Naive thymus-derived CD4-positive, alpha-beta T cell (primary cell): ENCODE measurements at regions of chr11 and their contacts with region 1.

Region 1: GRCh38 chr11:72222907-72223614 is 1.5 kb upstream of the INPPL1 start:
- DNase-seq: peak; percentile 81 to 97 (median 90)
- ATAC-seq: peak; percentile 89
- H3K4me3 ChIP-seq: peak overlapping the region; percentile 77
- H3K4me3 Mint-ChIP-seq: peak overlapping the region; percentile 88 to 99 (median 91)
- H3K27ac ChIP-seq: peak overlapping the region; percentile 88
- H3K27ac Mint-ChIP-seq: peak overlapping the region; percentile 76 to 95 (median 89)
- H3K4me1 ChIP-seq: peaks cover 10 to 12% of the 10 kb centered on the region in 2 donors
- H3K4me1 Mint-ChIP-seq: peaks cover 12 to 31% (median 24%) of the 10 kb centered on the region in 7 donors
- H3K27me3 ChIP-seq: no peaks in the 10 kb centered on the region
- H3K27me3 Mint-ChIP-seq: peaks cover 0 to 8% (median 5%) of the 10 kb centered on the region in 5 donors

Region 2: DNA sequence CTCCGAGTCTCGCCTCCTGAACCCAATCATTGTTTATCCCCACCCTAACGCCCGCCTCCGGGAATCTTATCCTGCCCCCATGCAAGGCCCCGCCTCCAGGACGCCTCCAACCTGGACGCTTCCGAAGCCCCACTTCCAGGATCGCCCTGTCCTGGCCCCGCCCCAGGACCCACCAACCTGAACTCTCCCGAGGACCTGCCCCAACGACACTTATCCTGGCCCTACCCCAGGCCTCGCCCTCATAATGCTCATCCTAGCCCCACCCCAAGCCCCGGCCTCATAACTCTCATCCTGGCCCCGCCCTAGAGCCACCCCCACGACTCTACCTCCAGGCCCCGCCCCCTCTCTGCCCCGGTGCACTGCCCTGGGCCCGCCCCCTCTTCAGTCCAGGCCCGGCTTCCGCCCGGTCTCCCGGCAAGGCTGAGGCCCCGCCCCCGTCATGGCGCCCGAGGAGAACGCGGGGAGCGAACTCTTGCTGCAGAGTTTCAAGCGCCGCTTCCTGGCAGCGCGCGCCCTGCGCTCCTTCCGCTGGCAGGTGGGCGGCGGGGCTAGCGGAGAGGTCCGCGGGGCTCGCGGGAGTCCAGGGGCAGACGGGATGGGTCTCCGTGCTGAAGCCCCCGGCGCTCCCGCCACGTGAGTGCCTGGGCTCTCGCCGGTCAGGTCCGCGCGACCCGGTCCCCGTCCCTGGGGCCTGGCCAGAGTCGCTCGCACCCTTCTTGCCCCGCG is 435.8 kb before region 1 on chr11:
- CTCF ChIA-PET with region 1: no interaction called
- POLR2A ChIA-PET with region 1: no interaction called
- intact Hi-C with region 1: loop called in 1 of 2 experiments (anchors 5 kb)
- DNase-seq: peak; percentile 86 to 96 (median 94)
- ATAC-seq: peak; percentile 98
- H3K4me3 ChIP-seq: peak overlapping the region; percentile 86
- H3K4me3 Mint-ChIP-seq: peak overlapping the region; percentile 95 to 100 (median 98)
- H3K27ac ChIP-seq: peak overlapping the region; percentile 93
- H3K27ac Mint-ChIP-seq: peak overlapping the region; percentile 88 to 99 (median 98)
- H3K4me1 ChIP-seq: no peaks in the 10 kb centered on the region
- H3K4me1 Mint-ChIP-seq: peaks cover 0 to 20% (median 12%) of the 10 kb centered on the region in 7 donors
- H3K27me3 ChIP-seq: no peaks in the 10 kb centered on the region
- H3K27me3 Mint-ChIP-seq: peaks cover 0 to 5% (median 0%) of the 10 kb centered on the region in 5 donors

Region 3: DNA sequence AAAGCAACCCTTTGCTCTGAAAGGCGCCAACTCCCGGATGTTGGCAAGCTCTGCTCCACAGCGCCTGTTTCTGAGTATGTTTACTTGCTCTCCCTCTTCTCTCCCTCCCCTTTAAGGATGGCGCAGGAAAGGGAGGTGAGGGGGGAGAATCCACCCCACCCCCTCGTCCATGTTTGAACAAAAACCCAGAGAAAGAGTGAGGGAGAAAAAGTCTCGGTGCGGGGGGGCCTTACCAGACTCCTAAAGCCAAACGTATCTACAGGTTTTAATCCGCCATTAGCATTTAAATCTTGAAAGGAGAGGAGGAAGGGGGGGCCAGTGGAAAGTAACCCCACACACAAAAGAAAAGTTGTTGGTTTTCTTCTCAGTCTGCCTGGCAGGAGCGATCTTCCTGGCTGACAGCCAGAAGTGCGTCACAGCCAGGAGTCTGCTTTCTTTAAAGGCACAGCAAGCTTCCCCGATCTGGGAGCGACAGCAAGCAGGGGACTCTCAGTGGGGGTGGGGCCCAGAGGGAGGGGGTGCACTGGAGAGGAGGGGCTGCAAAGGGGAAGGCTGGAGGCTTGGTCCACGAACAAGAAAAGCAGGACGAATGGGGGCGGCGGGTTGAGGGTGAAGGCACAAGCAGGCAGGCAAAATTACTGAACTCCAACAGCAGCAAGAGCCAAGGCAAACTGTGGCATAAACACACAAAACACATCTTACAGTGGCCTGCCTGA is 182.2 kb before region 1 on chr11:
- CTCF ChIA-PET with region 1: interaction called, 3 read pairs
- POLR2A ChIA-PET with region 1: interaction called, 17 read pairs
- intact Hi-C with region 1: loop called (anchors 1 kb)
- DNase-seq: peak; percentile 51 to 91 (median 86)
- ATAC-seq: peak; percentile 84
- H3K4me3 ChIP-seq: peak overlapping the region; percentile 89
- H3K4me3 Mint-ChIP-seq: no peak overlapping the region
- H3K27ac ChIP-seq: peak overlapping the region; percentile 88
- H3K27ac Mint-ChIP-seq: no peak overlapping the region
- H3K4me1 ChIP-seq: peaks cover 48 to 57% of the 10 kb centered on the region in 2 donors
- H3K4me1 Mint-ChIP-seq: peaks cover 19 to 53% (median 41%) of the 10 kb centered on the region in 7 donors
- H3K27me3 ChIP-seq: no peaks in the 10 kb centered on the region
- H3K27me3 Mint-ChIP-seq: no peaks in the 10 kb centered on the region

Region 4: DNA sequence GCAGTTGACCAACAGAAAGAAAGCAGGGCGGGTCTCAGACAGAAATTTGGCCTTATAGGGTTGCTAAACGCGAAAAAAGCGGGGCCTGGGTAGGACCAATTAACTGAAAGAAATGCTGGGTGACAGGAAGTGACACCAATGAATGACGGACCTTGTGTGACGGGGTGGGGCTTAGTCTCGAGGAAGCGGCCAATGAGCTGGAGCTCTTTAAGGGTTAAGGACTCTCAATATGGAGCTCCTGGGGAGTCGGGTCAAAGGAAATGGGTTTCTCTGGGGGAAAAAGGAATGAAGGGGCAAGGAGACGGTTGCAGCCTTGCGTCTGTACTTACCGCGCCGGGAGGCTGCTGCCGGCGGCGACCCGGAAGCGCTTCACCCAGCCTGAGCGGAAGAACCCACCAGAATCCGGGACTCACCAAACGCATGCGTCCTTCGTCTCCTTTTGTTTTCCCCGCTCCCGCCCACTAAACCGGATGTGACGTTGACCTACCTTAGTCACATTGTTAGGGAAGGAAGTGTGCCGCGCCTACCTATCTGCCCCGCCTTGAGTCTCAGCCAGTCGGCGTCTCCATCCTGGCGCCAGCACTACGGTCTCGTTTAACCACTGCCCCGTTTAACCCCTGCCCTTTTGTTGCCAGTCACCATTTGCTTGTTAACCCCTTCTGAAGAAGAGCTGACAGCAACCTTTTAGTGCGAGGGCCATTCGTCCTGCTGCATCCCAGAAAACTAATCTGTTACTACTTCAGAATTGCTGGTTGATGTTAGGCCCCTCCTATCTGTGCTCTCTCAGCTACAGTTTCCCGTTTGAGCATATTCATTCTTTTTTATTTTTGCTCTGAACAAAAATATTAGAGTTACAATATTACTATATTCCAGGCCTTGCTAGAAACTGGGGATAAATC is 110.5 kb before region 1 on chr11 and contains the start of gene ANAPC15:
- CTCF ChIA-PET with region 1: interaction called, 4 read pairs
- POLR2A ChIA-PET with region 1: interaction called, 18 read pairs
- intact Hi-C with region 1: loop called (anchors 1 kb)
- DNase-seq: peak; percentile 83 to 100 (median 99)
- ATAC-seq: peak; percentile 91
- H3K4me3 ChIP-seq: peak within 1 kb of the TSS; percentile 85
- H3K4me3 Mint-ChIP-seq: peak within 1 kb of the TSS; percentile 73 to 100 (median 96)
- H3K27ac ChIP-seq: peak within 1 kb of the TSS; percentile 92
- H3K27ac Mint-ChIP-seq: peak within 1 kb of the TSS; percentile 97 to 100 (median 98)
- H3K4me1 ChIP-seq: peaks cover 12 to 14% of the 10 kb centered on the region in 2 donors
- H3K4me1 Mint-ChIP-seq: peaks cover 12 to 29% (median 25%) of the 10 kb centered on the region in 7 donors
- H3K27me3 ChIP-seq: no peaks in the 10 kb centered on the region
- H3K27me3 Mint-ChIP-seq: peaks cover 0 to 6% (median 0%) of the 10 kb centered on the region in 5 donors
- total RNA-seq, gene ANAPC15: 43.0 to 59.6 (median 44.1) TPM

Region 5: GRCh38 chr11:72278911-72279310 is 55.9 kb after region 1 on chr11:
- CTCF ChIA-PET with region 1: no interaction called
- POLR2A ChIA-PET with region 1: no interaction called
- intact Hi-C with region 1: no loop called
- DNase-seq: no peak
- ATAC-seq: no peak
- H3K4me3 ChIP-seq: no peak overlapping the region
- H3K4me3 Mint-ChIP-seq: no peak overlapping the region
- H3K27ac ChIP-seq: no peak overlapping the region
- H3K27ac Mint-ChIP-seq: no peak overlapping the region
- H3K4me1 ChIP-seq: no peaks in the 10 kb centered on the region
- H3K4me1 Mint-ChIP-seq: no peaks in the 10 kb centered on the region
- H3K27me3 ChIP-seq: no peaks in the 10 kb centered on the region
- H3K27me3 Mint-ChIP-seq: peaks cover 32 to 44% (median 39%) of the 10 kb centered on the region in 5 donors

Region 6: DNA sequence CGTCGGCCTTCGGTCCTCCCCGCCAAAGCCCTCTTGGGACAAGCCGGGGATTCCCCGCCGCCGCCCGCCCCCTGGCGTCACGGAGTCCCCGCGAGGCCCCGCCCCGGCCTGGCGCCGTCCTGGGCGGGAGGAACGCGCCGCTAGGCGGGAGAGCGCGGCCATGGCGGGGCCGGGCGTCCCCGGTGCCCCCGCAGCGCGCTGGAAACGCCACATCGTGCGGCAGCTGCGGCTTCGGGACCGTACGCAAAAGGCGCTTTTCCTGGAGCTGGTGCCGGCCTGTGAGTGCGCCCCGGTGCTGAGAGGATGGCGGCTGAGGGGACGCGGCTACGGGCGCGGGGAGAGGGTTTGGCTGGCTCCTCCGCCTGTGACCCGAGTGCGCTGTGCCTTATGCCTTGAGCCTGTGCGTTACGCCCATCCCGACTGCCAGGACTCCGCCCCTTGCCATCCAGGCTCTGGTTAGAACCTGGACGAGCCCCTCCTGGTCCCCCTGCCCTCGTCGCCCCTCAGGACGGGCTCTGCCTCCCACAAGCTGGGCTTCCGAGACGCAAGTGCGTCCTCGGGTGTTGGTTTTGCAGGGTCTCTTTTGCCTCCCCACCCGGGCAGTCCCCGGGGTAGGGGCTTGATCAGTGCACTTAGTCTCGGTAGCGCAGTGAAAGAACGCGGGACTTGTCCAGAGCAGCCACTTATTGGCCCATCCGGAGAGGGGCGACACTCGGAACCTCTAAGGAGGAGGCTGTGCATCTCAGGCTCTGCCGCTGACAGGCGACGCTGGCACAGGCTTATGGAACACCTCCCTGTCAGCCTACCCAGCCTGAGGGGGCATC is 591.4 kb after region 1 on chr11 and contains the start of gene ATG16L2:
- CTCF ChIA-PET with region 1: no interaction called
- POLR2A ChIA-PET with region 1: no interaction called
- intact Hi-C with region 1: loop called (anchors 1 to 5 kb)
- DNase-seq: peak in 8 of 9 donors; percentile 53 to 96 (median 92)
- ATAC-seq: peak; percentile 89
- H3K4me3 ChIP-seq: peak within 1 kb of the TSS; percentile 89
- H3K4me3 Mint-ChIP-seq: peak within 1 kb of the TSS; percentile 97 to 99 (median 98)
- H3K27ac ChIP-seq: peak within 1 kb of the TSS; percentile 100
- H3K27ac Mint-ChIP-seq: peak within 1 kb of the TSS; percentile 86 to 99 (median 98)
- H3K4me1 ChIP-seq: peaks cover 18 to 23% of the 10 kb centered on the region in 2 donors
- H3K4me1 Mint-ChIP-seq: peaks cover 31 to 67% (median 52%) of the 10 kb centered on the region in 7 donors
- H3K27me3 ChIP-seq: no peaks in the 10 kb centered on the region
- H3K27me3 Mint-ChIP-seq: no peaks in the 10 kb centered on the region
- total RNA-seq, gene ATG16L2: 99.5 to 199 (median 166) TPM

Region 7: GRCh38 chr11:73360336-73361013 is 1137.4 kb after region 1 on chr11:
- CTCF ChIA-PET with region 1: no interaction called
- POLR2A ChIA-PET with region 1: no interaction called
- intact Hi-C with region 1: loop called in 1 of 2 experiments (anchors 10 kb)
- DNase-seq: peak in 5 of 9 donors; percentile 24 to 35 (median 31)
- ATAC-seq: peak; percentile 56
- H3K4me3 ChIP-seq: no peak overlapping the region
- H3K4me3 Mint-ChIP-seq: no peak overlapping the region
- H3K27ac ChIP-seq: no peak overlapping the region
- H3K27ac Mint-ChIP-seq: peak overlapping the region in 6 of 9 donors; percentile 6 to 72 (median 31)
- H3K4me1 ChIP-seq: peaks cover 2 to 6% of the 10 kb centered on the region in 2 donors
- H3K4me1 Mint-ChIP-seq: peaks cover 0 to 4% (median 0%) of the 10 kb centered on the region in 7 donors
- H3K27me3 ChIP-seq: no peaks in the 10 kb centered on the region
- H3K27me3 Mint-ChIP-seq: no peaks in the 10 kb centered on the region